Activated CD4-positive, alpha-beta T cell treated with anti-CD3 and anti-CD28 coated beads for 36 hours (primary cell): ENCODE measurements at regions of chrX and their contacts with region 1.

Region 1: GRCh38 chrX:20620306-20620705 is 353.6 kb upstream of the RPS6KA3 start:
- DNase-seq: no peak
- ATAC-seq: peak; percentile 74
- H3K4me3 Mint-ChIP-seq: no peak overlapping the region
- H3K27ac Mint-ChIP-seq: no peak overlapping the region
- H3K4me1 Mint-ChIP-seq: peaks cover 4% of the 10 kb centered on the region
- H3K27me3 Mint-ChIP-seq: peaks cover 4% of the 10 kb centered on the region

Region 2: DNA sequence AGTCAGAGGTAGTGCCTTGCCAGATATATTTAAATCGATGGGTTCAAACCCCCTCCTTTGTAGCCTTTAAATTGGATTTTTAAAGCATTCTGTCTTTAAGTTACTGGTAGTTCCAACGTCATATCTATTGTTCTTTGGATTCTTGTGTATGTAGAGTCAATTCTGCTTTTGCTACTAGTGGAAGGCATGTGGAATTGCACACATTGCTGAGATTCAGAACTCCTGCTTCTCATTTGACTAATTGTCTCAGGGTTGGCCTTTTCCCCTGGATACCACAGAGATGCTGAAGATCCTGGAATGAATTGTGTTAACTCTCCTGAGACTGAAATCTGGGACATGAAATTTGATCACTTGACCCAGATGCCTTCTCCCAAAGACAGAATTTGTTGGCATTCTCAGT is 25.3 kb before region 1 on chrX:
- CTCF ChIA-PET with region 1: no interaction called
- POLR2A ChIA-PET with region 1: no interaction called
- intact Hi-C with region 1: loop called in 1 of 2 experiments (anchors 2 kb)
- DNase-seq: no peak
- ATAC-seq: no peak
- H3K4me3 Mint-ChIP-seq: no peak overlapping the region
- H3K27ac Mint-ChIP-seq: no peak overlapping the region
- H3K4me1 Mint-ChIP-seq: peaks cover 23% of the 10 kb centered on the region
- H3K27me3 Mint-ChIP-seq: peaks cover 6% of the 10 kb centered on the region

Region 3: DNA sequence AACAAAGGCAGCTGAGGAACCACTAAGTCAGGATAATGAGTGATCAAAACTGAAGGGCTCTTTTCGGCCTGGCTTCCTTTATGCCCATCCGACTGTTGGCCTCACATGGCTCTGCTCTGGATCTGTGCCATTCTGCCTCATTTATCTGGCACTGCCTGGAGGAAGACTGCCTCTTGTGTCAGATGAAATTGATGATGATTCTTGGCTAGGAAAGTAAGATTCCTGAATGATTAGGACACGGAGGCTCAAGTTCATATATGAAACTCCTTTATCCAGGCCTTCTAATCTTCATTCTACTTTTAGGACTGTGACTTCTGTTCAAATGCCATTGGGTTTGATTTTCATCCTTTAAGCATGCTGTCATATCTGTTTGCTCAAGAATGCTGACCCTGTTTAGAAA is 121.8 kb after region 1 on chrX:
- CTCF ChIA-PET with region 1: no interaction called
- POLR2A ChIA-PET with region 1: no interaction called
- intact Hi-C with region 1: no loop called
- DNase-seq: no peak
- ATAC-seq: no peak
- H3K4me3 Mint-ChIP-seq: no peak overlapping the region
- H3K27ac Mint-ChIP-seq: no peak overlapping the region
- H3K4me1 Mint-ChIP-seq: peaks cover 5% of the 10 kb centered on the region
- H3K27me3 Mint-ChIP-seq: peaks cover 5% of the 10 kb centered on the region

Region 4: DNA sequence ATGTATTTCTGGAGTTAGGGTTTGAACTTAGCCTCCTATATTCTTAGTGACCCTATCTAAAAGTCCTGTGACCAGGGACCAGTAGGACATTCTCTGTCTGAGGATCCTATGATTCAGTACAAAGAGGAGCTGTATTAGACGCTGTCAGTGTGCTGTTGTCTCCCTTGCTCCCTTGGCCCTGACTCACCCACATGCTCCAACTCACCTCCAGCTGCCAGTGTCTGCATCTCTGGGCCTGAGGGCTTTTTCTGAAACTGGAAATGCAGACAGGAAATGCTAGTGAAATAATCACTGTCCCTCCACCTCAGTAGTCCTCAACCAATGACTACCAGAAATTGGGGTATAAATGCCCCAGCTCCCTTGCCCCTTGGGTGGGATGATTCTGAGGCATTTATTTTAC is 181.7 kb after region 1 on chrX:
- CTCF ChIA-PET with region 1: no interaction called
- POLR2A ChIA-PET with region 1: no interaction called
- intact Hi-C with region 1: no loop called
- DNase-seq: no peak
- ATAC-seq: no peak
- H3K4me3 Mint-ChIP-seq: no peak overlapping the region
- H3K27ac Mint-ChIP-seq: no peak overlapping the region
- H3K4me1 Mint-ChIP-seq: no peaks in the 10 kb centered on the region
- H3K27me3 Mint-ChIP-seq: peaks cover 3% of the 10 kb centered on the region